H1 (cell line): ENCODE measurements at regions of chr14 and their contacts with region 1.

Region 1: DNA sequence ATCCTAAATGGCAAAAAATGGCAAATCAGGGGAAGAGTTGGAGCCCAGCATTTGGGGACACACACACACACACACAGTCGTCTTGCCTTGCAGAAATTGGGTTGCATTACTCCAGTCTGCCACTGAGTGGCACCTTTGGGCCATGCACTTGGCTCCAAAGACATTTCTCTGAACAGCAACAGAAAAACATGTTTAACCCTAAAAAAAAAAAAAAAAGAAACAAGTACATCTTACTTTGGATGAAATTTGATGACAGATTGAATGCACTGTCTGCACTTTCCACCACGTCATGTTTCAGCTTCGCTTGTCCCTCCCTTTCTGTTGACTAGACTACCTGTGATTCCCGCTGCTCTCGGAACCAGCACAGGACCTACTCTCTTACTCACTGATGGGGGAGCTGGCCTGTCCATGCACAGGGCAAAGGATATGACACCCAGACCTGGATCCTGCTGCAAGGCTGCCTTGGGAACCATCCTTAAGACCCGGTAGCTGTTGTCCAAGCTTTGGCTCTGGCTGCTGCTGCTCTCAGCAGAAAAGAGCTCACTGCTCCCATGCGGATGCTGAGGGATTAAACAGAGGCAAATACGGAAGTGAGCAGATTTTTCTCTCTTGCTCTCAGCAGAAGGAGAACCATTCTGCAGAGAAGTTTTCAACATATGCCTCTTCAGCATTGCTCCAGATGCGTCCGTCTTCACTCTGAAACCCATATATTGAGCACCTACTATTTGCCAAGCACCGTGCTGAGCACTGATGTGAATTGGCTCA is 376.8 kb downstream of the DPF3 start:
- DNase-seq: peak; percentile 19 to 84
- H3K4me3 ChIP-seq: no peak overlapping the region
- H3K27ac ChIP-seq: no peak overlapping the region
- H3K4me1 ChIP-seq: no peaks in the 10 kb centered on the region; a peak in 2 of 7 replicates
- H3K27me3 ChIP-seq: no peaks in the 10 kb centered on the region
- CTCF ChIP-seq: peak; percentile 81 to 83 (median 82)
- EP300 ChIP-seq: no peak
- POLR2A ChIP-seq: no peak
- RAD21 ChIP-seq: peak; percentile 94 to 95

Region 2: GRCh38 chr14:72503696-72504368 is 13.3 kb before region 1 on chr14:
- CTCF ChIA-PET with region 1: interaction called, 49 read pairs
- POLR2A ChIA-PET with region 1: no interaction called
- DNase-seq: no peak
- H3K4me3 ChIP-seq: no peak overlapping the region
- H3K27ac ChIP-seq: no peak overlapping the region
- H3K4me1 ChIP-seq: no peaks in the 10 kb centered on the region
- H3K27me3 ChIP-seq: no peaks in the 10 kb centered on the region
- CTCF ChIP-seq: no peak
- EP300 ChIP-seq: no peak
- POLR2A ChIP-seq: no peak
- RAD21 ChIP-seq: no peak

Region 3: GRCh38 chr14:72554994-72555604 is 38.0 kb after region 1 on chr14:
- CTCF ChIA-PET with region 1: interaction called, 10 read pairs
- POLR2A ChIA-PET with region 1: no interaction called
- DNase-seq: no peak
- H3K4me3 ChIP-seq: no peak overlapping the region
- H3K27ac ChIP-seq: no peak overlapping the region
- H3K4me1 ChIP-seq: peaks cover 3 to 12% (median 7%) of the 10 kb centered on the region in 4 experiments; a peak in 5 of 7 replicates
- H3K27me3 ChIP-seq: no peaks in the 10 kb centered on the region
- CTCF ChIP-seq: peak in 1 of 3 experiments; percentile 22; a peak in 1 of 4 replicates
- EP300 ChIP-seq: no peak
- POLR2A ChIP-seq: no peak
- RAD21 ChIP-seq: no peak

Region 4: GRCh38 chr14:72573725-72574417 is 56.8 kb after region 1 on chr14:
- CTCF ChIA-PET with region 1: interaction called, 11 read pairs
- POLR2A ChIA-PET with region 1: no interaction called
- DNase-seq: no peak
- H3K4me3 ChIP-seq: no peak overlapping the region
- H3K27ac ChIP-seq: no peak overlapping the region
- H3K4me1 ChIP-seq: no peaks in the 10 kb centered on the region
- H3K27me3 ChIP-seq: no peaks in the 10 kb centered on the region
- CTCF ChIP-seq: no peak
- EP300 ChIP-seq: no peak
- POLR2A ChIP-seq: no peak
- RAD21 ChIP-seq: no peak

Region 5: GRCh38 chr14:72704502-72704901 is 187.4 kb after region 1 on chr14:
- CTCF ChIA-PET with region 1: interaction called, 14 read pairs
- POLR2A ChIA-PET with region 1: no interaction called
- DNase-seq: no peak
- H3K4me3 ChIP-seq: no peak overlapping the region
- H3K27ac ChIP-seq: no peak overlapping the region
- H3K4me1 ChIP-seq: peaks cover 0 to 14% (median 6%) of the 10 kb centered on the region in 4 experiments; a peak in 6 of 7 replicates
- H3K27me3 ChIP-seq: no peaks in the 10 kb centered on the region
- CTCF ChIP-seq: no peak
- EP300 ChIP-seq: no peak
- POLR2A ChIP-seq: no peak
- RAD21 ChIP-seq: no peak

Region 6: GRCh38 chr14:72904840-72905561 is 387.9 kb after region 1 on chr14:
- CTCF ChIA-PET with region 1: interaction called, 113 read pairs
- POLR2A ChIA-PET with region 1: no interaction called
- DNase-seq: peak in 1 of 2 experiments; percentile 71
- H3K4me3 ChIP-seq: no peak overlapping the region
- H3K27ac ChIP-seq: no peak overlapping the region
- H3K4me1 ChIP-seq: peaks cover 0 to 11% (median 0%) of the 10 kb centered on the region in 4 experiments; a peak in 3 of 7 replicates
- H3K27me3 ChIP-seq: no peaks in the 10 kb centered on the region
- CTCF ChIP-seq: peak; percentile 63 to 93 (median 93)
- EP300 ChIP-seq: no peak
- POLR2A ChIP-seq: no peak
- RAD21 ChIP-seq: peak; percentile 98 to 99

Region 7: DNA sequence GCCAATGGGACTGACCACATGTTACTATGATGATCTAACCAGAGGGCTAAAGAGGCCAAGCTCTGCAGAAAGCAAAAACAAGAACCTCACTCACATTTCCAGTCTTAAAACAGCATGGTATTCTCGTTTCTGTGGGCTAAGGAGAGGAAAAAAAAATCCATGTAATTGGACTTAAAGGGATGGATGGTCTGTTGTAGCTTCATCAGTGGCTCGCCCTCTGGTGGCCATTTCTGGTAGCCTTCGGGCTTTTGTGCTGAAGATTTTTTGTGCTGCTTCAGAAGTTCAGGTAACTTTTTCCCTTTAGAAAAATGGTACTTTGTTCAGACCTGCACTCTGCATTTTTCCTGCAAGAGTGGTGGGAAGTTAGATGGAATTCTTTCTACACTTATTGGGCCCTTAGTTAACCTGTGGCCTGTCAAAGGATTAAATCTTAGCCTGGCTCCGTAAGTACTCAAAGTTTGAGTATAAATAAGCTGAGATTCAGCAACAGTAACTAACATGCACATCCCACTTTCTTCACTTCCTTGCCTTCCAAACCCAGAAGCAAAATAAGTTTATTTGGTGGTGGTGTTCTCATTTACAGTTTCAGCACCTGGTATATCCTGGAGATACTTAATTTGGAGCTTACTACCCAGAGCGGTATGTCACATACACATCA is 431.5 kb after region 1 on chr14:
- CTCF ChIA-PET with region 1: interaction called, 107 read pairs
- POLR2A ChIA-PET with region 1: interaction called, 3 read pairs
- DNase-seq: peak in 1 of 2 experiments; percentile 87
- H3K4me3 ChIP-seq: no peak overlapping the region
- H3K27ac ChIP-seq: no peak overlapping the region
- H3K4me1 ChIP-seq: no peaks in the 10 kb centered on the region
- H3K27me3 ChIP-seq: no peaks in the 10 kb centered on the region
- CTCF ChIP-seq: peak; percentile 66 to 84 (median 67)
- EP300 ChIP-seq: no peak
- POLR2A ChIP-seq: no peak
- RAD21 ChIP-seq: peak; percentile 65 to 75